ENCODE measurements at regions of chr6 and their contacts with region 1.

Region 1: GRCh38 chr6:115514656-115515055 is 546.0 kb downstream of the FRK start:
- DNase-seq: no peak
- H3K4me3 ChIP-seq: no peak overlapping the region
- H3K27ac ChIP-seq: no peak overlapping the region
- H3K4me1 ChIP-seq: no peaks in the 10 kb centered on the region
- H3K27me3 ChIP-seq: no peaks in the 10 kb centered on the region
- CTCF ChIP-seq: no peak

Region 2: DNA sequence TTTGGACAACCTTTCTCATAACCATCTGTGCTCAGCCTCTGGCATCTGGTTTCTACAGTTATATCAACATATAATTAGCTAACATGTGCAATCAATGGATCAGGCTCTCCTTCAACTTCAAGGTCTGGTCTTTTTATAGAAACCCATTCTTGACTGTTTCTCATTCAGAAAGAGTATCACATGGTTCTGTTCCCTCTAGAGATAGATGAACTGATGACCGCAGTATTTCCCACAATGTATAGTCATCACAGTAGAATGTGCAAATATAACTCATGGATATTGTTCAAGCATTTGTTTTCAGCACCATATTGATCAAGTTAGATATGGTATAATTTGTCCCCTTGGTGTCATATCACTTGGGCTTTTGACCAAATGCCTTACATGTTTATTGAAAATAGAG is 110.2 kb before region 1 on chr6:
- intact Hi-C with region 1: no loop called
- DNase-seq: no peak
- H3K4me3 ChIP-seq: no peak overlapping the region
- H3K27ac ChIP-seq: no peak overlapping the region
- H3K4me1 ChIP-seq: no peaks in the 10 kb centered on the region
- H3K27me3 ChIP-seq: no peaks in the 10 kb centered on the region
- CTCF ChIP-seq: no peak

Region 3: DNA sequence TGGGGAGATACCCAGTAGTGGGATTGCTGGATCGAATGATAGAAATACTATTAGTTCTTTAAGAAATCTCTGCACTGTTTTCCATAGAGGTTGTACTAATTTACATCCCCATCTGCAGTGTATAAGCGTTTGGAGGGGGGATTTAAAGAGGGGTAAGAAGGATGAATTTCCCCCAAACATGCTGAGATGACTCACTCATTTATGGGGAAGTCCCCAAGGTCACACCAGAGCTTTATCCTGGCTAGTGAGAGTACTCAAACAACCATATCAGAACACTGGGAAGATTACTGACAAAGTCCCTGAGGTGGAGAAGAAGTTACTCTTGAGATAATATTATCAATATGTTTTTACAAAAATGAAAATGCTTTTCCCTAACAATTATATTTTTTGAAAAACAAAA is 1867.1 kb after region 1 on chr6:
- intact Hi-C with region 1: loop called (anchors 5 kb)
- DNase-seq: no peak
- H3K4me3 ChIP-seq: no peak overlapping the region
- H3K27ac ChIP-seq: no peak overlapping the region
- H3K4me1 ChIP-seq: no peaks in the 10 kb centered on the region
- H3K27me3 ChIP-seq: no peaks in the 10 kb centered on the region
- CTCF ChIP-seq: no peak